ENCODE measurements at regions of chr10 and their contacts with region 1.

Region 1: GRCh38 chr10:12348870-12349628 is at the start of gene CAMK1D:
- DNase-seq: peak; percentile 81 to 96 (median 91)
- ATAC-seq: peak; percentile 65
- H3K4me3 ChIP-seq: peak within 1 kb of the TSS; percentile 67 to 84
- H3K4me3 Mint-ChIP-seq: peak within 1 kb of the TSS; percentile 98
- H3K27ac ChIP-seq: peak within 1 kb of the TSS; percentile 59 to 77
- H3K27ac Mint-ChIP-seq: peak within 1 kb of the TSS; percentile 98
- H3K4me1 ChIP-seq: peaks cover 23% of the 10 kb centered on the region
- H3K4me1 Mint-ChIP-seq: peaks cover 40% of the 10 kb centered on the region
- H3K27me3 ChIP-seq: no peaks in the 10 kb centered on the region
- H3K27me3 Mint-ChIP-seq: no peaks in the 10 kb centered on the region
- CTCF ChIP-seq: no peak
- total RNA-seq, gene CAMK1D: 24.6 to 25.7 TPM

Region 2: GRCh38 chr10:12068449-12069269 is 280.4 kb before region 1 on chr10 and contains the start of gene DHTKD1:
- CTCF ChIA-PET with region 1: no interaction called
- POLR2A ChIA-PET with region 1: no interaction called
- intact Hi-C with region 1: loop called in 1 of 2 experiments (anchors 2 kb)
- DNase-seq: peak; percentile 97 to 99 (median 98)
- ATAC-seq: peak; percentile 98
- H3K4me3 ChIP-seq: peak within 1 kb of the TSS; percentile 82 to 89
- H3K4me3 Mint-ChIP-seq: peak within 1 kb of the TSS; percentile 88
- H3K27ac ChIP-seq: peak within 1 kb of the TSS; percentile 66 to 75
- H3K27ac Mint-ChIP-seq: peak within 1 kb of the TSS; percentile 96
- H3K4me1 ChIP-seq: peaks cover 7% of the 10 kb centered on the region
- H3K4me1 Mint-ChIP-seq: peaks cover 19% of the 10 kb centered on the region
- H3K27me3 ChIP-seq: no peaks in the 10 kb centered on the region
- H3K27me3 Mint-ChIP-seq: no peaks in the 10 kb centered on the region
- CTCF ChIP-seq: peak; percentile 31
- total RNA-seq, gene DHTKD1: 6.6 TPM

Region 3: DNA sequence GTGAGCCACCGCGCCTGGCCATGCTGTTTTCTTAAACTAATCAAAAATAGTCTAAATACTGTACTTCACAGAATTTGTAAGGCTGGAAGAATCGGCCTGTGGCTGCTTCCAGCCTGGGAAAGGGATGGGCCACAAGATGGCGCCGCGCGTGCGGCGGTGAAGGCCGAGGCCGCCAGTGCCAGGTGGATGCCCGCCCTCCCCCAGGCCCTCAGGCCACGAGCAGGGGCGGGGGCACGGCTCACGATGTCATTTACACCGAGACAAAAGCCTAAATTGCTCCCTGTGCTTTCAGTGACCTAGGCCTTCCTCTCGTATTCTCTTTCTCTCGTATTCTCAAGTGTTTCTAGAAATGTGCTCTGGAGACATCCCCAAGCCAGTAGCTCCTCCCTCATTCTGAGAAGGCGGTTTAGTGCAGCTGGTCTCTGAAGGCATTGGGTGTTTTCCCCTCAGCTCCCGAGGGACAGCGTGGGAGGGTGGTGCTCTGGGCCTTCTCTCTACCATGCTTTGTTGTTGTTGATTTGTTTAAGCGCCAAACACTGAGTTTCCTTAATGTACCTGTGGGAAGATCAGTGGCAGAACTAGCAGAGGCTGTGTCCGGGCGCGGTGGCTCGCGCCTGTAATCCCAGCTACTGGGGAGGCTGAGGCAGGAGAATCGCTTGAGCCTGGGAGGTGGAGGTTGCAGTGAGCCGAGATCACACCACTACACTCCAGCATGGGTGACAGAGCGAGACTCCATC is 84.7 kb before region 1 on chr10:
- CTCF ChIA-PET with region 1: interaction called, 5 read pairs
- POLR2A ChIA-PET with region 1: no interaction called
- intact Hi-C with region 1: loop called in 1 of 2 experiments (anchors 1 kb)
- DNase-seq: peak; percentile 30 to 83 (median 67)
- ATAC-seq: peak; percentile 76
- H3K4me3 ChIP-seq: peak overlapping the region; percentile 35 to 36
- H3K4me3 Mint-ChIP-seq: peak overlapping the region; percentile 72
- H3K27ac ChIP-seq: no peak overlapping the region
- H3K27ac Mint-ChIP-seq: peak overlapping the region; percentile 64
- H3K4me1 ChIP-seq: no peaks in the 10 kb centered on the region
- H3K4me1 Mint-ChIP-seq: peaks cover 14% of the 10 kb centered on the region
- H3K27me3 ChIP-seq: no peaks in the 10 kb centered on the region
- H3K27me3 Mint-ChIP-seq: no peaks in the 10 kb centered on the region
- CTCF ChIP-seq: peak; percentile 70

Region 4: GRCh38 chr10:12448729-12449391 is 99.8 kb after region 1 on chr10:
- CTCF ChIA-PET with region 1: interaction called, 4 read pairs
- POLR2A ChIA-PET with region 1: interaction called, 3 read pairs
- intact Hi-C with region 1: loop called (anchors 1 kb)
- DNase-seq: peak; percentile 38 to 96 (median 75)
- ATAC-seq: peak; percentile 87
- H3K4me3 ChIP-seq: peak overlapping the region in 1 of 2 experiments; percentile 7
- H3K4me3 Mint-ChIP-seq: peak overlapping the region; percentile 38
- H3K27ac ChIP-seq: peak overlapping the region; percentile 43 to 66
- H3K27ac Mint-ChIP-seq: peak overlapping the region; percentile 86
- H3K4me1 ChIP-seq: peaks cover 18% of the 10 kb centered on the region
- H3K4me1 Mint-ChIP-seq: peaks cover 51% of the 10 kb centered on the region
- H3K27me3 ChIP-seq: no peaks in the 10 kb centered on the region
- H3K27me3 Mint-ChIP-seq: no peaks in the 10 kb centered on the region
- CTCF ChIP-seq: no peak

Region 5: GRCh38 chr10:13099666-13100348 is 750.8 kb after region 1 on chr10 and contains the start of gene OPTN:
- CTCF ChIA-PET with region 1: no interaction called
- POLR2A ChIA-PET with region 1: no interaction called
- intact Hi-C with region 1: loop called in 1 of 2 experiments (anchors 5 kb)
- DNase-seq: peak; percentile 62 to 93 (median 79)
- ATAC-seq: peak; percentile 75
- H3K4me3 ChIP-seq: peak within 1 kb of the TSS; percentile 62 to 89
- H3K4me3 Mint-ChIP-seq: peak within 1 kb of the TSS; percentile 92
- H3K27ac ChIP-seq: peak within 1 kb of the TSS; percentile 69 to 94
- H3K27ac Mint-ChIP-seq: peak within 1 kb of the TSS; percentile 98
- H3K4me1 ChIP-seq: peaks cover 6% of the 10 kb centered on the region
- H3K4me1 Mint-ChIP-seq: peaks cover 46% of the 10 kb centered on the region
- H3K27me3 ChIP-seq: no peaks in the 10 kb centered on the region
- H3K27me3 Mint-ChIP-seq: no peaks in the 10 kb centered on the region
- CTCF ChIP-seq: peak; percentile 57
- total RNA-seq, gene OPTN: 66.3 to 71.6 TPM

Measured in CD8-positive, alpha-beta T cell (primary cell).